ENCODE measurements at regions of chr13 and their contacts with region 1.

Region 1: GRCh38 chr13:96781141-96781540 is 213.1 kb downstream of the OXGR1 start:
- DNase-seq: peak; percentile 23 to 88
- H3K4me3 ChIP-seq: no peak overlapping the region
- H3K27ac ChIP-seq: peak overlapping the region; percentile 68 to 69
- H3K4me1 ChIP-seq: peaks cover 9 to 22% of the 10 kb centered on the region in 2 donors
- H3K27me3 ChIP-seq: no peaks in the 10 kb centered on the region
- CTCF ChIP-seq: no peak

Region 2: DNA sequence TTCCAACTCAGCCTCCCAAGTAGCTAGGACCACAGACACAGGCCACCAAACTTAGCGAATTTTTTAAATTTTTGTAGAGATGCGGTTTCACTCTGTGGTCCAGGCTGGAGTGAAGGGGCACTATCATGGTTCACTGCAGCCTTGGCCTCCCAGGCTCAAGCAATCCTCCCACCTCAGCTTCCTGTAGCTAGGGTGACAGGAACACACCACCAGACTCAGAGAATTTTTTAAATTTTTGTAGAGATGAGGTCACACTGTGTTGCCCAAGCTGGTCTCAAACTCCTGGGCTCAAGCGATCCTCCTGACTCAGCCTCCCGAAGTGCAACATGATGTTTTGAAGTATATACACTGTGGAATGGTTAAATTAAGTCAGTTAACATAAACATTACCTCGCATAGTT is 50.5 kb before region 1 on chr13:
- intact Hi-C with region 1: no loop called
- DNase-seq: no peak
- H3K4me3 ChIP-seq: no peak overlapping the region
- H3K27ac ChIP-seq: no peak overlapping the region
- H3K4me1 ChIP-seq: no peaks in the 10 kb centered on the region
- H3K27me3 ChIP-seq: no peaks in the 10 kb centered on the region
- CTCF ChIP-seq: no peak

Region 3: GRCh38 chr13:96744367-96745331 is 36.5 kb before region 1 on chr13:
- intact Hi-C with region 1: no loop called
- DNase-seq: no peak
- H3K4me3 ChIP-seq: no peak overlapping the region
- H3K27ac ChIP-seq: no peak overlapping the region
- H3K4me1 ChIP-seq: no peaks in the 10 kb centered on the region
- H3K27me3 ChIP-seq: no peaks in the 10 kb centered on the region
- CTCF ChIP-seq: no peak

Region 4: DNA sequence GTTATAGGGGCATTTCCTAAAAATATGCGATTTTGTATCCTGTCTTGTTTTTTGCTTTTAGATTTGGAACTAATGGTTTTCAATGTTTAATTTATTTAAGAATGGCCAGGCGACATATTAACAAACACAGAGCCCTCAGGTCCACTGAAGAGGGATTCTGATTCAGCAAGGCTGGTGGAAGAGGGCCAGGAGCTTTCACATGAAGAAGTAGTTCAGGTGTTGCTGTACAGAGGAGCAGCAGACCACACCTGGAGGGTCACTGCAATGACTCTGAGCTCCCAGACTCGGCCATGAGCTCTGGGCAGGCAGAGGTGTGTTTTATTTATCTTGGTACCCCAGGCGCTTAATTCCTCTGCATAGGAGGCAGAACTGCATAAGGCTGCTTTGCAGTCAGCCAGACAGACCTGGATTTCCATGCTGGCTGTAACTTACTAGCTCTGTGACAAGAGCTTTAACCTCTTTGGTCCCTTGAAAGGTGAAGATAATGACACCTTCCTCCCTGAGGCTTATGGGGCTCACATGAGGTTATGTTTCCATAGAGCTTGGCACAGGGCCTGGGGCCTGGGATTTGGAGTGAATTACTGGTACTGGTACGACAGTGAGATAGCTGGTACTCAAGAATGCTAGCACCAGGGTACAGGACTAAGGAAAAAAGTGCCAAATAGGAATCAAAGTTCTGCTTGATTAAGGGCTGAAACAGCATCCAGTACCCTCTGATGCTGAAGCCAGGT is 28.4 kb after region 1 on chr13:
- intact Hi-C with region 1: loop called (anchors 2 kb)
- DNase-seq: no peak
- H3K4me3 ChIP-seq: no peak overlapping the region
- H3K27ac ChIP-seq: peak overlapping the region; percentile 75 to 76
- H3K4me1 ChIP-seq: peaks cover 5 to 48% of the 10 kb centered on the region in 2 donors
- H3K27me3 ChIP-seq: no peaks in the 10 kb centered on the region
- CTCF ChIP-seq: no peak

Region 5: DNA sequence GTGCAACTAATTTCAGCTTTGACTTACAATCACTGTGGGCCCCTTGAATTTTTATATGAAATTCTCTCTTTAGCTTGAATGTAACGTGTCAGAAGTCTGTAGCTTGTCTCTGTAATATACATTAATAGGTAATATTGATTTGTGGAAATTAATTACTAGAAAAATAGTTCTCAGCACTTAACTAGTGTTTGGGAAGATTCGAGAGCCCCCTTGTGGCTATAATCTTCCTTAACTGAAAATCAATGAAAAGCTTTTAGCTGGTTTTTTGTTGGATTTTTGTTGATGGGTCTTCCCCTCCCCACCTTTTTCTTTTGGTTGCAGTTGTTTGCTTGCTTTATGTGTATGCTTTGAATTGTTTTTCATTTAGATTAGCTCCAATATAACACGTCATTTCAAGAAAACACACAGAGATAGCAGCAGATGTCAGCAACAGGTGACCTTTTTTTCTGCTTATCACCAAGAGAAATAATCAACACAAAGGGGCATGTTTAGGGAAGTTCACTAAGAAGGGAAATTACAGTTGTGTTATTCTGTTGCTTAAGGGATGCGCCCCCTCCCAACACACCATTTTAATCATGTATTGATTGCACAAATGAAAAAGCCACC is 36.3 kb after region 1 on chr13:
- intact Hi-C with region 1: loop called (anchors 2 kb)
- DNase-seq: no peak
- H3K4me3 ChIP-seq: no peak overlapping the region
- H3K27ac ChIP-seq: no peak overlapping the region
- H3K4me1 ChIP-seq: peaks cover 10 to 38% of the 10 kb centered on the region in 2 donors
- H3K27me3 ChIP-seq: no peaks in the 10 kb centered on the region
- CTCF ChIP-seq: peak in 2 of 3 experiments; percentile 50 to 65

Measured in ascending aorta (tissue), 2 donors.